ENCODE measurements at regions of chr4 and their contacts with region 1.

Region 1: DNA sequence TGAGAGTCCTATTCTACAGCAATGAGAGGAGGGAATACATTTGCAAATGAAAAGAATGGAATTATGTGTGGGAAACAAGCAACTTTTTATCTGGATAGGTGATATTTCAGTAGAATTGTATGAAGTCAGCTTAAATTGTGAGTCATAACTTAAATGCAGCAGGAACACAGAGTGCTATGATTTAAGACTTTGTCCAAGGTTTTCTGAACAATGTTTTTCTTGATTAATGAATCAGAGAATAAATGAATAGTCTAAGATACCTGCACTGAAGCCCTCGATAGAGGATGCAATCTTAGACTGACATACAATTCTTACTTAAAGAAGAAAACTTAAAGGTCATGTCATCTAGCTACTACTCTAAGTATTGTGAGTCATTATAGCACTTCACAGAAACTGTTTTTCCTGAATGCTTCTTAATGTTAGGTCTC is 8.0 kb downstream of the ARHGEF38 start:
- DNase-seq: no peak
- ATAC-seq: no peak

Region 2: DNA sequence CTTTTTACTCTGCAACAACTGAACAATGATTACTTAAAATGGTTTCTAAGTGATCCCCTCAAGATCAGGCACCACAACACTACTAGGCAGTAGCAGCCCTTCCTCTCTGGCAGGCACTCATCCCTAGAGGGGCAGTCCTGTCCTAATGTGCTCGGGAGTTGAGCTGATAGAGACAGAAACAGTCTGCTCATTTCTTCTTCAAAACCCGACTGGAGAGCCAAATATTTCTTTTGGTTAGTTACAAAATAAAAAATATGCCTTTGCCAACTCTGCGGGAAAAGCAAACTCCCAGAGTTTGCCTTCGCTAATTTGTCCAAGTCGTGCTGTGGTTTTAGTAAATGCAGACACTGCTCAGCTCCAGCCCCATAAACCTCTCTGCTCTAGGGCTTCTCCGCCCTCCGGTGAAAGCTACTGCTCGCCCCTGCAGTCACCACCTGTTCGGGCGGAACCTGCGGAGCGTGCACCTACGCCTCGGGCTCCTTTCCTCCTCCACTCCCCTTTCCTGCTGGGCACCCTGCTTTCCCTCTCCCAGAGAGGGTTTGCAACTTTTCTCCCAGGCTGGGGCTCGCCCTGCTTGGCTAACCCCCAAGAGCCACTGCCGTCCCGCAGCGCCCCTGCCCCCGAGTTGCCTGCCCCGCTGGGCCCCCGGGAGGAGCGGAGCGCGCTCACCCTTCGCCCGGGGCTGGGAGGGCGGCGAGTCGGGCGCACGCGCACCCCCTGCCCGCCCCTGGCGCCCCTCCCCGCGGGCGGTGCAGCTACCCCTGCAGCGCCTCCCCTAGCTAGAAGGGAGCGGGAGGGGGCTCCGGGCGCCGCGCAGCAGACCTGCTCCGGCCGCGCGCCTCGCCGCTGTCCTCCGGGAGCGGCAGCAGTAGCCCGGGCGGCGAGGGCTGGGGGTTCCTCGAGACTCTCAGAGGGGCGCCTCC is 334.5 kb after region 1 on chr4 and contains the start of gene NPNT:
- intact Hi-C with region 1: loop called in 1 of 2 experiments (anchors 5 kb)
- DNase-seq: peak; percentile 24
- ATAC-seq: peak; percentile 82 to 89
- total RNA-seq, gene NPNT: 3.9 to 4.7 TPM

Region 3: GRCh38 chr4:105933048-105933447 is 372.6 kb after region 1 on chr4:
- intact Hi-C with region 1: no loop called
- DNase-seq: no peak
- ATAC-seq: no peak